CD4-positive, alpha-beta T cell (primary cell): ENCODE measurements at regions of chr1 and their contacts with region 1.

Region 1: DNA sequence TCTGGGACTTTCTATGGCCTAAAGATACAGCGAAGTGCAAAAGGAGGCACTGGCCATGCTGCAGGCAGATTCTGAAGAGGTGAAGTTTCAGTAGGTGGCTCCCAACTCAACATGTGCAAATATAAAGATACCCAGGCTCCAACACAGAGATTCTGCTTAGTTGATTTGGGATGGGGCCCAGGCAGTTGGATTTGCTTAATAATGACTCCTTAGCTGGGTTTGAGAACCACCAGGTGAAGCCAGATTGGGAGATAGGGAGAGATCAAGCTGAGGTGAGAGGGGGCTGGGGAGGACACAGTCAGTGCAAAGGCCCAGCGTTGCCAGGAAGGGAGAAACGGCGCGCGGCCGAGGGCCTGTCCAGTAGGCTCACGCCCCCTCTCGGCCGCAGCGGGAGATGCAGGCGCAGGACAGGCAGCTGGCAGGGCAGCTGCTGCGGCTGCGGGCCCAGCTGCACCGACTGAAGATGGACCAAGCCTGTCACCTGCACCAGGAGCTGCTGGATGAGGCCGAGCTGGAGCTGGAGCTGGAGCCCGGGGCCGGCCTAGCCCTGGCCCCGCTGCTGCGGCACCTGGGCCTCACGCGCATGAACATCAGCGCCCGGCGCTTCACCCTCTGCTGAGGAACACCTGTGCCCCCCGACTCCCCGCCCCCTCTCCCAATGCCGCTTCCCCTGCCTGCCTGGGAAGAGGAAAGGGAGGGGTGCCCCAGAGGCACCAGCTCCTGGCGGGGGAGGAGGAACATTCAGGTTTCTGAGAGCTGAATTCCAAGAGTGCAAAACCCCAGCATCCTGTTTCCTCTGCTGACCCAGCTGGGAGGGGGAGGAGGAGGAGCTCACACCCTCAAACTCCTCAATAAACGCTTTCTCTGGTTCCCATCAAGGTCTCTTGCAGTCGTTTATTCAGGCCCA is 1.2 kb downstream of the FAM167B start:
- DNase-seq: peak; percentile 56 to 86 (median 66)
- ATAC-seq: no peak
- H3K4me3 ChIP-seq: peak overlapping the region; percentile 41
- H3K4me3 Mint-ChIP-seq: peak overlapping the region; percentile 86
- H3K27ac ChIP-seq: peak overlapping the region; percentile 87 to 94
- H3K27ac Mint-ChIP-seq: peak overlapping the region; percentile 99
- H3K4me1 ChIP-seq: peaks cover 65% of the 10 kb centered on the region
- H3K4me1 Mint-ChIP-seq: peaks cover 58% of the 10 kb centered on the region
- H3K27me3 ChIP-seq: no peaks in the 10 kb centered on the region
- H3K27me3 Mint-ChIP-seq: no peaks in the 10 kb centered on the region
- CTCF ChIP-seq: peak; percentile 92

Region 2: DNA sequence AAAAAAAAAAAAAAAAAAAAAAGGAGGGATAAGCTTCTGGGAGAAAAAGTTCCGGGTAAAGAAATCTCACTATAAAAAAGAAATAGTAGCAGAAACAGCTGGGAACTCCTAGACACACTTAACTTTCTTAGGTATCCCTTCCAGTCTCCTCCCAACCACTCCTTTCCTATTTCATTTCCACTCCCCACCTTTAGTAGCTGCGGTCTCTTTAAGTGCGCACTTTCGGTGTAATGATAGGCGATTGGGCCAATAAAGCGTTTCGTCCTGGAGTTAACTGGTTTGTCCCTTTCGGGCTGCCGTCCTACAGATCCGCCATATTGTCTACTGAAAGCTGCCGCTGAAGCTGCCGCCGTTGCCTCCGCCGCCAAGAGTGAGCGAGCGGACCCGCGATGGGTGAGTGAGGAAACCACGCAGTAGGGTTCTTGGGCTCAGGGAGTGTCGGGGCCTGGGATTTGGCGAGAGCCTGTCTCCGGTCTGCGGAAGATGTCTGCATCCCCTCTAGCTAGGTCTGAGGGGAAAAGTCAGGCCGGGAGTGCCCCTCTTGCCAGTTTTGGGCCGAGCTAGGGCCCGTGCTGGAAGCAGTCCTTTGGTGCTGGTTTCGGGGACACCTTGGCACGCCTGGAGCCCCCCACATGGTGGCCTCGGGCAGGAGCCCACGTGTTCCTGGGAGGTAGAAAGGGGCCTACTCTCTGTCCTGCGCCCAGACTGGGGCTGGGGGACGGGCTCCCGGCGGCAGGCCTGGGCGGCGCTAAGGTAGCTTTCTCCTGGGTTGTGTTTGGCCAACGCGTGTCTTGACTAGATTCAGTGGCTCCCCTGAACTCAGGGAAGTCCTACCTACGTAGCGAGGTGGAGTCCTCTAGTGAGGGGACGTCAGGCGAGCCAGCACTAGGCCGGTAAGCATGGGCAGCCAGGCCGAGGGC is 140.2 kb before region 1 on chr1 and contains the start of gene KPNA6:
- CTCF ChIA-PET with region 1: interaction called, 3 read pairs
- POLR2A ChIA-PET with region 1: interaction called, 20 read pairs
- intact Hi-C with region 1: no loop called
- DNase-seq: peak; percentile 81 to 96 (median 88)
- ATAC-seq: peak; percentile 88
- H3K4me3 ChIP-seq: peak within 1 kb of the TSS; percentile 99
- H3K4me3 Mint-ChIP-seq: peak within 1 kb of the TSS; percentile 99
- H3K27ac ChIP-seq: peak within 1 kb of the TSS; percentile 92 to 96
- H3K27ac Mint-ChIP-seq: peak within 1 kb of the TSS; percentile 98
- H3K4me1 ChIP-seq: peaks cover 45% of the 10 kb centered on the region
- H3K4me1 Mint-ChIP-seq: peaks cover 53% of the 10 kb centered on the region
- H3K27me3 ChIP-seq: no peaks in the 10 kb centered on the region
- H3K27me3 Mint-ChIP-seq: no peaks in the 10 kb centered on the region
- CTCF ChIP-seq: no peak
- total RNA-seq, gene KPNA6: 47.1 to 47.8 TPM

Region 3: GRCh38 chr1:32200226-32201010 is 47.8 kb before region 1 on chr1 and contains the start of gene CCDC28B:
- CTCF ChIA-PET with region 1: interaction called, 4 read pairs
- POLR2A ChIA-PET with region 1: interaction called, 27 read pairs
- intact Hi-C with region 1: loop called in 1 of 2 experiments (anchors 2 kb)
- DNase-seq: peak in 13 of 14 experiments; percentile 15 to 74 (median 46)
- ATAC-seq: peak; percentile 54
- H3K4me3 ChIP-seq: peak within 1 kb of the TSS; percentile 87
- H3K4me3 Mint-ChIP-seq: peak within 1 kb of the TSS; percentile 82
- H3K27ac ChIP-seq: peak within 1 kb of the TSS; percentile 81 to 97
- H3K27ac Mint-ChIP-seq: peak within 1 kb of the TSS; percentile 95
- H3K4me1 ChIP-seq: peaks cover 75% of the 10 kb centered on the region
- H3K4me1 Mint-ChIP-seq: peaks cover 64% of the 10 kb centered on the region
- H3K27me3 ChIP-seq: no peaks in the 10 kb centered on the region
- H3K27me3 Mint-ChIP-seq: no peaks in the 10 kb centered on the region
- CTCF ChIP-seq: no peak
- total RNA-seq, gene CCDC28B: 4.0 to 5.7 TPM

Region 4: DNA sequence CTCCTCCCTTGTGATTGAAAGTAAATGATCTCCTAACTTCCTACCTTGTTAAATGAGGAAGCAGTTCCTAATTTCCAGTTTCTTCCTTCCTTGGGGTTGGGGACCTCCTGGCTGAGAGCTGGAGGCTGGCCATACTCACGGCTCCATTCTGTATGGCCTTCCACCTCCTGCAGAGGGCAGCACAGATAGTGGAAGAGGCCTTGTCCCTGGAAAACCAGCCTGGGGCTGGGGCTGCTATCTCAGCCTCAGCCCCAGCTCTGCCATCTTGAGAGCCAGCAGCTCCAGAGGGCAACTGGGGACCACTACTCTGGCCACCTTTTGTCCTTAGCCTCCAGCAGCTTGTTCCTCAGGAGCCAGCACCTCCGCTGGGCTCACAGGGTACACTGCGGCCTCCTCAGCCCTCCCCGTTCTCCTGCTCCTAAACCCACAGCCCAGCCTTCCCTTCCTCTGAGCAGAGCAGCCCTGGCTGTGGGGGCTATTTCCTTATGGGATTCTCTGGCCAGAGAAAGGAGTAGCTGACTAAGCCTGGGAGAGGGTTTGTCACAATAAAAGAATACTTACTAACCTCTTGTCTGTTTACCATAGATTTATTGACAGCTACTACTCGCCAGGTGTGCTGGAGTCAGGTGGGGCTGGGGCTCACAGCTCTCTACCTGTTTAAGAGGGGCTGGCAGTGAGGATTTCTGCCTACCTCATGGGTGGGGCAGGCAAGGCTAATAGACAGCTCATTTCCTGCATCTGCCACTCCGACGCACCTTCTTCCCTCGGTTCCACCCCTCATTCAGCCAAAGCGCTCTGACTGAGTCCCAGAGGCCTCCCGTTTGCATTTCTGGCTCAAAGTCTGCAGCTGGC is 32.4 kb before region 1 on chr1:
- CTCF ChIA-PET with region 1: interaction called, 21 read pairs
- POLR2A ChIA-PET with region 1: interaction called, 13 read pairs
- intact Hi-C with region 1: no loop called
- DNase-seq: peak; percentile 33 to 81 (median 50)
- ATAC-seq: peak; percentile 96
- H3K4me3 ChIP-seq: no peak overlapping the region
- H3K4me3 Mint-ChIP-seq: no peak overlapping the region
- H3K27ac ChIP-seq: no peak overlapping the region
- H3K27ac Mint-ChIP-seq: peak overlapping the region; percentile 62
- H3K4me1 ChIP-seq: peaks cover 16% of the 10 kb centered on the region
- H3K4me1 Mint-ChIP-seq: peaks cover 13% of the 10 kb centered on the region
- H3K27me3 ChIP-seq: no peaks in the 10 kb centered on the region
- H3K27me3 Mint-ChIP-seq: no peaks in the 10 kb centered on the region
- CTCF ChIP-seq: peak; percentile 85

Region 5: GRCh38 chr1:32266921-32267591 is 18.8 kb after region 1 on chr1:
- CTCF ChIA-PET with region 1: interaction called, 40 read pairs
- POLR2A ChIA-PET with region 1: interaction called, 543 read pairs
- intact Hi-C with region 1: loop called (anchors 1 to 2 kb)
- DNase-seq: peak in 4 of 14 experiments; percentile 21 to 67 (median 58)
- ATAC-seq: peak; percentile 54
- H3K4me3 ChIP-seq: no peak overlapping the region
- H3K4me3 Mint-ChIP-seq: peak overlapping the region; percentile 81
- H3K27ac ChIP-seq: peak overlapping the region; percentile 52 to 57
- H3K27ac Mint-ChIP-seq: peak overlapping the region; percentile 92
- H3K4me1 ChIP-seq: peaks cover 91% of the 10 kb centered on the region
- H3K4me1 Mint-ChIP-seq: peaks cover 60% of the 10 kb centered on the region
- H3K27me3 ChIP-seq: no peaks in the 10 kb centered on the region
- H3K27me3 Mint-ChIP-seq: no peaks in the 10 kb centered on the region
- CTCF ChIP-seq: no peak

Region 6: GRCh38 chr1:32291708-32292492 is 43.7 kb after region 1 on chr1 and contains the start of gene HDAC1:
- CTCF ChIA-PET with region 1: interaction called, 9 read pairs
- POLR2A ChIA-PET with region 1: interaction called, 175 read pairs
- intact Hi-C with region 1: loop called in 1 of 2 experiments (anchors 2 kb)
- DNase-seq: peak; percentile 93 to 98 (median 96)
- ATAC-seq: peak; percentile 91
- H3K4me3 ChIP-seq: peak within 1 kb of the TSS; percentile 98
- H3K4me3 Mint-ChIP-seq: peak within 1 kb of the TSS; percentile 100
- H3K27ac ChIP-seq: peak within 1 kb of the TSS; percentile 81
- H3K27ac Mint-ChIP-seq: peak within 1 kb of the TSS; percentile 92
- H3K4me1 ChIP-seq: peaks cover 67% of the 10 kb centered on the region
- H3K4me1 Mint-ChIP-seq: peaks cover 54% of the 10 kb centered on the region
- H3K27me3 ChIP-seq: no peaks in the 10 kb centered on the region
- H3K27me3 Mint-ChIP-seq: no peaks in the 10 kb centered on the region
- CTCF ChIP-seq: no peak
- total RNA-seq, gene HDAC1: 56.9 to 61.0 TPM

Region 7: DNA sequence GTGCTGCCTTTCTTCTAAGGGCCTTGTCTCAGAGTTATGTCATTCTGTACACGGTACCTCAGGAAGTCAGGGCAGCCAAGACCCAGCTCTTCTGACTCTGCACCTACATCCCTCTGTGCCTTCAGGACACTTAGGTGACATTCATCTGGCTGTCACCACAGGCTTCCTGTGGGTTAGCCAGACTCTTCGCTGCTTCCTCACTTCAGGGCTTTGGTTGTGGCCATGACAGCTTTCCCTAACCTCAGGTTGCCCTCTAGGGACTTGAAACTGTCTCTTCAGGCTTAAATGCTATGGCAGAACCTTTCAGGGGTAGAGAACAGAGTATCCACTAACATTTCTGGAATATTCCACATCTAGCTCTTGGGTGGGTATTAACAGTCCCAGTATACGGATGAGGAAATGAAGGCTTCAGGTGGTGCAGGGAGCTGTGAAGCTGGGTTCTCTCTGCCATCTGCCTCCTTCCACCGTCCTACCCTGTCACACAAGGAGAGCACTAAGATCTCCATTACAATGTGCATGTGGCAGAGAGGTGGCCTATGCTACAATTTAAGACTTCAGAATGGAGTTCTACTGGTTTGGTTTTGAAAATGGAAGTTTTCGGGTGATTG is 124.0 kb after region 1 on chr1:
- CTCF ChIA-PET with region 1: interaction called, 4 read pairs
- POLR2A ChIA-PET with region 1: interaction called, 5 read pairs
- intact Hi-C with region 1: loop called in 1 of 2 experiments (anchors 5 kb)
- DNase-seq: peak; percentile 34 to 88 (median 48)
- ATAC-seq: peak; percentile 85
- H3K4me3 ChIP-seq: no peak overlapping the region
- H3K4me3 Mint-ChIP-seq: no peak overlapping the region
- H3K27ac ChIP-seq: no peak overlapping the region
- H3K27ac Mint-ChIP-seq: peak overlapping the region; percentile 18
- H3K4me1 ChIP-seq: peaks cover 15% of the 10 kb centered on the region
- H3K4me1 Mint-ChIP-seq: peaks cover 28% of the 10 kb centered on the region
- H3K27me3 ChIP-seq: no peaks in the 10 kb centered on the region
- H3K27me3 Mint-ChIP-seq: no peaks in the 10 kb centered on the region
- CTCF ChIP-seq: peak; percentile 58